ENCODE measurements at regions of chr18 and their contacts with region 1.

Region 1: GRCh38 chr18:59358712-59359575 is at the start of gene LMAN1:
- DNase-seq: peak; percentile 97
- H3K4me3 Mint-ChIP-seq: peak within 1 kb of the TSS; percentile 88
- H3K27ac Mint-ChIP-seq: peak within 1 kb of the TSS; percentile 90
- H3K4me1 Mint-ChIP-seq: peaks cover 34% of the 10 kb centered on the region
- H3K27me3 Mint-ChIP-seq: peaks cover 6% of the 10 kb centered on the region
- total RNA-seq, gene LMAN1: 141 and 148 TPM in 2 replicates

Region 2: DNA sequence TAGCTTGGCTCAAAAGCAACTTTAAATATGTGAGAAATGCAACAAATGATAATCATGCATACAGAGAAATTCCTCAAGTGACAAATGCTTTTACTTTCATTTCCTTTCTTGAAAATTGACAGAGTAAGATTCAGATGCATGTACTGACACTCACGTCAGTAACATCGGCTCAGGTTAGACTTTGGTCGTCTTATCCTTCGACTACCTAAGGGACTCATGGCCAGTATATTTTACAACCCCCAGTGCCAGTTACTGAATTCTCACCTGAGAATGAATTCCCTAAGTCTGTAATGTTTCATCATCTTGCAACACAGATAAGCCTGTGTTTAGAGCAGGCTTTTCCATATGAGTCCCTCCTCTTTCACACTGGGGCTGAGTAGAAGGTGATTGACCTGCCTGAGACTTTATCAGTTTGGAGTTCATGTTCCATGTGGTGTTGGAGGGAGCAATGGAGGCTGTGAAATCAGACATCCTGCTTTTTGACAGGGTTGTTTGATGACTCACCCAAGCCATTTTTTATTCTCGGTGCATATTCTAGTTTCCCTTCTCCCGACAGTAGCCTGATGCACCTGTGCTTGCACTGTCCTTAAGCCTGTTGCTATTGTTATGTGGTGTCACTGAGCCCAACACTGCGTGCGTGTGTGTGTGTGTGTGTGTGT is 1525.4 kb before region 1 on chr18:
- intact Hi-C with region 1: loop called (anchors 10 kb)
- DNase-seq: peak; percentile 74
- H3K4me3 Mint-ChIP-seq: peak overlapping the region; percentile 70
- H3K27ac Mint-ChIP-seq: peak overlapping the region; percentile 46
- H3K4me1 Mint-ChIP-seq: peaks cover 31% of the 10 kb centered on the region
- H3K27me3 Mint-ChIP-seq: peaks cover 15% of the 10 kb centered on the region

Region 3: DNA sequence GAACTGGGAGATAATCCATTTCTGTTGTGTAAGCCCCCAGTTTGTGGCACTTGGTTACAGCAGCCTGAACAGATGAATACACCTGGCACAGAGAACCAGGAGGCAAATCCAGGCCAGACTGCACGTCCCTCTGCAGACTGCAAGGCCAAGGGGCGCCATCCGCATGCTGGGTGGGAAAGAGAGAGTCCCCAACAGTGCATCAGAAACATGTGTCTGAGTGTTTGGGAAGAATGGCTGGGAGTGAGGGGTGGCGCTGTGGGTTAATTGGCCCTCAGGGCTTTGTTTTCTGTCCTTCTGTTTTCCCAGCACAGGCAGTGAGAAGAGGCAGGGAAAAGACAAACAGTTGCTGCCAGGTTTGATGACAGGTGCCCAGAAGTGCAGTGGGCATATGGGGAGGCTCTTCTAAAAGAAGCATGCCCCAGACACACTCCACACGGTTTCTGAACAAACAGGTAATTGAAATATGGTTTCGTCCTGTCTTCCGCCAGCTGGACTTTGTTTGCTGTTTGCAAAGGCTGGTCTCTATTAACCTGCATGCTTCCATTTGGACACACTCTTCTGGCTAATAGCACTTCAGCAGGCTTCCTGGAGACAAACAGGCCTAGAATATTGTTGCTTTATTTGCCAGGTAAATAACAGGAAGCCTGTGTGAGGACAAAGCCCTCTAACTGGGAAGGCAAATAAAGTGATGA is 262.7 kb before region 1 on chr18:
- intact Hi-C with region 1: no loop called
- DNase-seq: no peak
- H3K4me3 Mint-ChIP-seq: no peak overlapping the region
- H3K27ac Mint-ChIP-seq: no peak overlapping the region
- H3K4me1 Mint-ChIP-seq: no peaks in the 10 kb centered on the region
- H3K27me3 Mint-ChIP-seq: peaks cover 2% of the 10 kb centered on the region

Region 4: GRCh38 chr18:59139371-59140298 is 219.3 kb before region 1 on chr18 and contains the start of gene SEC11C:
- intact Hi-C with region 1: loop called (anchors 1 kb)
- DNase-seq: peak; percentile 99
- H3K4me3 Mint-ChIP-seq: peak within 1 kb of the TSS; percentile 97
- H3K27ac Mint-ChIP-seq: peak within 1 kb of the TSS; percentile 98
- H3K4me1 Mint-ChIP-seq: peaks cover 37% of the 10 kb centered on the region
- H3K27me3 Mint-ChIP-seq: peaks cover 27% of the 10 kb centered on the region
- total RNA-seq, gene SEC11C: 125 and 126 TPM in 2 replicates

Region 5: GRCh38 chr18:59268721-59269562 is 90.0 kb before region 1 on chr18:
- intact Hi-C with region 1: loop called (anchors 5 kb)
- DNase-seq: peak; percentile 81
- H3K4me3 Mint-ChIP-seq: peak overlapping the region; percentile 72
- H3K27ac Mint-ChIP-seq: no peak overlapping the region
- H3K4me1 Mint-ChIP-seq: peaks cover 18% of the 10 kb centered on the region
- H3K27me3 Mint-ChIP-seq: peaks cover 78% of the 10 kb centered on the region

Region 6: GRCh38 chr18:59340817-59341216 is 18.1 kb before region 1 on chr18:
- intact Hi-C with region 1: loop called (anchors 1 kb)
- DNase-seq: no peak
- H3K4me3 Mint-ChIP-seq: peak overlapping the region; percentile 58
- H3K27ac Mint-ChIP-seq: peak overlapping the region; percentile 72
- H3K4me1 Mint-ChIP-seq: peaks cover 42% of the 10 kb centered on the region
- H3K27me3 Mint-ChIP-seq: no peaks in the 10 kb centered on the region

Region 7: GRCh38 chr18:59379772-59380522 is 21.0 kb after region 1 on chr18:
- intact Hi-C with region 1: loop called (anchors 2 kb)
- DNase-seq: no peak
- H3K4me3 Mint-ChIP-seq: no peak overlapping the region
- H3K27ac Mint-ChIP-seq: no peak overlapping the region
- H3K4me1 Mint-ChIP-seq: peaks cover 8% of the 10 kb centered on the region
- H3K27me3 Mint-ChIP-seq: peaks cover 12% of the 10 kb centered on the region

Region 8: GRCh38 chr18:59402432-59403090 is 43.6 kb after region 1 on chr18:
- intact Hi-C with region 1: loop called (anchors 5 kb)
- DNase-seq: peak; percentile 92
- H3K4me3 Mint-ChIP-seq: no peak overlapping the region
- H3K27ac Mint-ChIP-seq: no peak overlapping the region
- H3K4me1 Mint-ChIP-seq: peaks cover 4% of the 10 kb centered on the region
- H3K27me3 Mint-ChIP-seq: peaks cover 11% of the 10 kb centered on the region

Region 9: DNA sequence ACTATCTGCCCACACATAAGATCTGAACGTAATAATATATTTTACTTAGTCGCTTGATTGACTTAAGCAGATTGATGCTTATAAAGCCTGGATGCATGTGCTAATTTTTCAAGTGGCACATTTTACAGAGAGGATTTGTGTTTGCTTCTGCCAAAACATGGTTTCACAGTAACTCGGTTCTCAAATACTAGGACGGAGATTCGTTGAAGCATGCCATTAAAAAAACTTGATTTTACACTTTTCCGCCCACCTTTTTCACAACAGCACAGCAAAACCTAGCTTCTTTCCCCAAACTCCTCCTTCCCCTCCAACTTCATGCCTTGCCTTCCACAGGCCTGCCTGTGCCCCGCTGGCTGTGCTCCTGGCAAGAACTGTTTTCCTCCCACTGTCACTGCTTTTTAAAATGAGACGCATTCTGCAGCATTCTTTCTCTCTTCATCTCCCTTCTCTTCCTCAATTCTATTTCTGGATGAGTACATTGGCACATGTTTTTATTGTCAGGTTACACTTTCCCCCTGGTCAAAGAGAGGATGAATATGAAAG is 55.2 kb after region 1 on chr18:
- intact Hi-C with region 1: no loop called
- DNase-seq: no peak
- H3K4me3 Mint-ChIP-seq: no peak overlapping the region
- H3K27ac Mint-ChIP-seq: no peak overlapping the region
- H3K4me1 Mint-ChIP-seq: no peaks in the 10 kb centered on the region
- H3K27me3 Mint-ChIP-seq: peaks cover 19% of the 10 kb centered on the region

Region 10: GRCh38 chr18:59516356-59517155 is 157.6 kb after region 1 on chr18:
- intact Hi-C with region 1: no loop called
- DNase-seq: no peak
- H3K4me3 Mint-ChIP-seq: no peak overlapping the region
- H3K27ac Mint-ChIP-seq: no peak overlapping the region
- H3K4me1 Mint-ChIP-seq: no peaks in the 10 kb centered on the region
- H3K27me3 Mint-ChIP-seq: no peaks in the 10 kb centered on the region

Measured in activated CD4-positive, alpha-beta T cell treated with anti-CD3 and anti-CD28 coated beads, Interleukin-2, amount 10 ng/mL, durations not matched to agents 24 days and 14 days (primary cell).